A549 (cell line): ENCODE measurements at regions of chr1 and their contacts with region 1.

Region 1: GRCh38 chr1:152533327-152533938 is 19.2 kb downstream of the CRCT1 start:
- DNase-seq: peak; percentile 33 to 76
- ATAC-seq: peak; percentile 81 to 92; a peak in 5 of 6 replicates
- H3K4me3 ChIP-seq: no peak overlapping the region
- H3K27ac ChIP-seq: no peak overlapping the region
- H3K4me1 ChIP-seq: no peaks in the 10 kb centered on the region
- CTCF ChIP-seq: peak; percentile 93
- EP300 ChIP-seq: no peak
- POLR2A ChIP-seq: no peak
- RAD21 ChIP-seq: peak; percentile 93 to 96

Region 2: DNA sequence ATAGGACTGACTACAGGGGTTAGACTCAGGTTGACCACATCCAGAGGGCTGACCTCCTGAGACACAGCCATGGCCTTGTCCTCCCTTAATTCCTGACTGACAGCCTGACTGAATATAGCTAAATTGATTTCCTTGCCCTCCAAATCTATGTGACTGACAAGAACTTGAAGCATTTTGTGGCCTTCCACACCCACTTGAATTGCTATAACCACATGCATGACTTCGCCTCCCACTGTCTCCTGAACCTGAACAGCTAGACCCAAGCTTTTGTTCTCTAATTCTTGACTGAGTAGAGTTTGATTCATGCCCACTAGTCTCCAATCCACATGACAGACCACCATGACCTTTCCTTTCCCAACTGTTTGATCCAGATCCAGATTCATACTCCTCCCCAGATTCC is 176.7 kb before region 1 on chr1:
- CTCF ChIA-PET with region 1: no interaction called
- POLR2A ChIA-PET with region 1: no interaction called
- DNase-seq: no peak
- ATAC-seq: no peak
- H3K4me3 ChIP-seq: no peak overlapping the region
- H3K27ac ChIP-seq: no peak overlapping the region
- H3K4me1 ChIP-seq: no peaks in the 10 kb centered on the region
- CTCF ChIP-seq: no peak
- EP300 ChIP-seq: no peak
- POLR2A ChIP-seq: no peak
- RAD21 ChIP-seq: no peak

Region 3: DNA sequence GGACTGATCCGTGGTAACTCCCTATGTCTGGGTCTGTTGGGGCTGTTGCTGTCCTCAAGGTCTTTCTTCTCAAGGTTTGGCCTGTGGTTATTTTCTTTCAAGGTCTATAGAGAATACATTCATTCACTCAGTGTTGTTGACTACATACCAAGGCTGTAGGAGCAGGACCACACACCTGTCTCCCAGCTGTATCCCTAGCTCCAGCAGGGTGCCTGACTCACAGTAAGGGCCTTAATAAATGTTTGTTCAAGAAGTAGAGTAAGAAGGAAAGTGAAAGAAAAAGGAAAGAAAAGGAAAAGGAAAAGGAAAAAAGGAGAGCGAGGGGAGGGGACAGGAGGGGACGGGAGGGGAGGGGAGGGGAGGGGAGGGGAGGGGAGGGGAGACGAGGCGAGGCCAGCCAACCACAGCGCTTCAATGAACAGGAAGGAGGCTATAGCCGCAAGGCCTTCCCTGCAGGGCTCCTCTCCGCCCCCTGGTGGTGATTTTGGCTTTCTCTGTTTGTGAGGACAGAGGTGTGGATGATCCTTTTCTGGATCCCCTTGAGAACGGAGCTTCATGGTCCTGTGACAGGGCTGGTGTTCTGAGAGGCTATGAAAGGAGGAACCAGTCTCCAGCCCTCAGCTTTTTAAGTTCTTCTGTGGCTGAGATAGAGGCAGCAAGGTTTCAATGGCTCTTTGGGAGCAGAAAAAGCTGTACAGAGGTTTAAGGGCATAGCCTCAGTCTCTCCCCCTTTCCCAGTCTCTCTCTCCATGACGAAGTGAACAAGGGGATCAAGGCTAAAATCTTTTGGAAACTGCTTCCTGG is 53.4 kb before region 1 on chr1:
- CTCF ChIA-PET with region 1: interaction called, 15 read pairs
- POLR2A ChIA-PET with region 1: no interaction called
- DNase-seq: peak; percentile 61 to 83
- ATAC-seq: peak; percentile 92 to 99
- H3K4me3 ChIP-seq: no peak overlapping the region
- H3K27ac ChIP-seq: no peak overlapping the region
- H3K4me1 ChIP-seq: no peaks in the 10 kb centered on the region
- CTCF ChIP-seq: peak; percentile 42
- EP300 ChIP-seq: no peak
- POLR2A ChIP-seq: no peak
- RAD21 ChIP-seq: peak in 1 of 2 experiments; percentile 18; a peak in 1 of 5 replicates

Region 4: DNA sequence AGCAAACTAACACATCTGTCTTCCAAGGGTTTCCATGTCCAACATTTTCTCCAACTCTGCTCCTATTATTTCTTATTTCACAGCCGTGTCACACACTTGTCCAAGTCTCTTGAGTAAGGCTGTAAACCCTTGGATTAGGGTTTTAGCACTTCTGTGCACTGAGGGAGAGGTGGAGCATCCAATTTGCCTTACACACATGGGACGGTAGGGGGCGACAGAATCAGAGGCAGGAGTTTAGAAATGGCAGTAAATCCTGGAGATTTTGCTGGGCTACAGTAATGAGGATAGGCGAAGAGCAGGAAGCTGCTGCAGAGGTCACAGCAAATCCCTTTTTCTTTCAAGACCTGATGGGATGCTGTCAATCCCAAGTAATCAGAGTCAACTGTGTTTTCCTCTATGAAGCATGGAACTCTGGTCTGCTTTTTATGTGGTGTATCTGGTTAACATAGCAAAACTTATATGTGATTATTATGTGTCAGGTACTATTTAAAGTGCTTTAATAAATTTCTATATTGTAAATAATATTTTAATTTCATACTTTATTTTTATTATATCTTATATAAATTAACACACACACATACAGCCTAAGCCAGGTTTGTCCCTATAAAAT is 38.3 kb before region 1 on chr1:
- CTCF ChIA-PET with region 1: interaction called, 75 read pairs
- POLR2A ChIA-PET with region 1: no interaction called
- DNase-seq: peak in 1 of 2 experiments; percentile 30
- ATAC-seq: no peak
- H3K4me3 ChIP-seq: no peak overlapping the region
- H3K27ac ChIP-seq: no peak overlapping the region
- H3K4me1 ChIP-seq: peaks cover 16% of the 10 kb centered on the region
- CTCF ChIP-seq: no peak
- EP300 ChIP-seq: no peak
- POLR2A ChIP-seq: no peak
- RAD21 ChIP-seq: 0 out of 5 replicates have a peak, but pooled peaks of 1 of the 2 experiments have one; percentile 11

Region 5: DNA sequence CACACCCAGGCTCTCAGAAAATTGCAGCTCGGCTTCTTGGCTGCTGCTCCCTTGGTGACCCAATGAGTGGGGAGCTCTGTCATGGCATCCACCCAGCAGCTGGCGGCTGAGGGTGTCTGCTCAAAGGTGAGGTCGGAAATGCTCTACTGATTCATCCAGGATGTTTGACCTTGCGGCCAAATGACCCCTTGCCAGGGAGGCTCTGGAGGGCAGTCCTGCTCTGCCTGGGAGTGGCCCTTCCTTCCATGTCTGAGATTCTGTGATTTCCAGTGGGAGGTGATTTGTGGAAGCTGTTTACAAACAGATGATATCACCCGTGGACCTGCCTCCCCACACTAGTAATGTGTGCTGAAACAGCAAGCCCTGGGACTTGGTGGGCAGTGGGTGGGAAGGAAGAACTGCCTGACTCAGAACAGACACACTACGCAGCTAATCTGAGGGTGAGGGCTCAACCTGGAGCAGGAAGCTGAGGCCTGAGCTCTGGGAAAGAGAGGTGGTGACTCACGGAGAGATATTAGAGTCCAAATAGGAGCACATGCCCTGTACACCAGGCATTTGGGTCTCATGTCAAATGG is 16.1 kb before region 1 on chr1:
- CTCF ChIA-PET with region 1: interaction called, 13 read pairs
- POLR2A ChIA-PET with region 1: no interaction called
- DNase-seq: peak; percentile 64 to 91
- ATAC-seq: peak; percentile 90 to 92
- H3K4me3 ChIP-seq: no peak overlapping the region
- H3K27ac ChIP-seq: peak overlapping the region; percentile 75 to 88
- H3K4me1 ChIP-seq: peaks cover 35% of the 10 kb centered on the region
- CTCF ChIP-seq: no peak
- EP300 ChIP-seq: peak in 1 of 2 experiments; percentile 69; a peak in 1 of 5 replicates
- POLR2A ChIP-seq: no peak
- RAD21 ChIP-seq: peak; percentile 6 to 21; a peak in 2 of 5 replicates